Heart right ventricle (tissue), 16 donors: ENCODE measurements at regions of chr2 and their contacts with region 1.

Region 1: GRCh38 chr2:46847235-46848068 is 68.2 kb downstream of the MCFD2 start:
- DNase-seq: peak; percentile 91 to 96
- ATAC-seq: peak; percentile 70 to 92 (median 88)
- H3K4me3 ChIP-seq: no peak overlapping the region
- H3K27ac ChIP-seq: peak overlapping the region; percentile 85 to 96 (median 92)
- H3K4me1 ChIP-seq: peaks cover 44 to 71% (median 65%) of the 10 kb centered on the region in 9 donors
- H3K27me3 ChIP-seq: no peaks in the 10 kb centered on the region
- CTCF ChIP-seq: peak in 3 of 9 donors; percentile 21 to 41 (median 29)

Region 2: DNA sequence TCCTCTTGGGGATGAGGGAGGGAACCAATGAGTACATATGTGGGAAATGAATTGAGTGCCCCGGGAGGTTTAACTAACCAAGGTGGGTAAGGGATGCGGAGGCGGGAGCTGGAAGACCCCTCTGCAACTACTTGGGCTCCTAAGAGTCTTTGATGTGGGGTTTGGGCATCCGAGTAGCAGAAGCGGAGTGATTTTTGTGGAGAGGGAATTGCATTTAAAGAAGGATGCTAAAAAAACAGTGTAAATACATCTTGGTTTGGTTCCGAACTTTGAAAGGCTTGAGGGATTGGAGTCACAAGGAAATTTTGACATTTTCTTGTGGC is 147.6 kb before region 1 on chr2:
- intact Hi-C with region 1: loop called in 1 of 10 experiments (anchors 10 kb)
- DNase-seq: no peak
- ATAC-seq: no peak
- H3K4me3 ChIP-seq: peak overlapping the region; percentile 69 to 94 (median 79)
- H3K27ac ChIP-seq: peak overlapping the region; percentile 92 to 99 (median 95)
- H3K4me1 ChIP-seq: peaks cover 2 to 58% (median 47%) of the 10 kb centered on the region in 9 donors
- H3K27me3 ChIP-seq: no peaks in the 10 kb centered on the region
- CTCF ChIP-seq: no peak

Region 3: DNA sequence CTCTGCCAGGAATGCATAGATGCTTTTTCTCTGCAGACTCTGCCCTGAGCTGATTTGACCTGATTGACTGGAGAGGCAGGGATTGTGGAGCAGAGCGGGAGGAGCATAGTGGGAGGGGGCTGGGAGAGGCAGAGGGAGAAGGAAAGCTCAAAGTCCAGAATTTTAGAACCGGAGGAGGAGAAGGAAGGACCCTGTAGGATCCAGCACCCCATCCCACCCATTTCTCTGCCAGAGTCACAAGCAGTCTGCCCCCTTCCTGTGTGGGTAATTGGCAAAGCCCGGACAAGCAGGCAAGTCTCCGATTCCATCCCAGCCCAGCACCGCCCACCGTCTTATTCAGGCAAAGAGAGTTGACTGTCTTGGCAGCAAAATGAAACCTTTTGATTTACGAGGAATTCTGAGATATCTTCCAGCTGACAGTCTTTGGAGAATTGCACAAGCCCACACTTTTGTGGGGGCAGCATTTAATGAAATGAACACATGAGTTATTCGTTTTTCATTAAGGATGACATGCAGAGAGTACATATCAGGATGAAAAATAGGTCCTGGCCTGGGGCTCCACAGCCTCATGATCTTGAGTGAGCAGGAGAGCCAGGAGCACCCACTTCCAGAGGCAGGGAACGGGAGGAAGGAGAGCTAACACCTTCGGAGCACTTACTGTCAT is 35.0 kb before region 1 on chr2:
- intact Hi-C with region 1: loop called in 4 of 10 experiments (anchors 1 to 5 kb)
- DNase-seq: peak; percentile 69 to 78
- ATAC-seq: peak; percentile 11 to 47 (median 38)
- H3K4me3 ChIP-seq: peak overlapping the region in 1 of 10 donors; percentile 5
- H3K27ac ChIP-seq: peak overlapping the region; percentile 57 to 93 (median 90)
- H3K4me1 ChIP-seq: peaks cover 36 to 63% (median 51%) of the 10 kb centered on the region in 9 donors
- H3K27me3 ChIP-seq: no peaks in the 10 kb centered on the region
- CTCF ChIP-seq: no peak

Region 4: GRCh38 chr2:46818121-46818888 is 29.1 kb before region 1 on chr2:
- intact Hi-C with region 1: loop called in 7 of 10 experiments (anchors 1 to 5 kb)
- DNase-seq: peak; percentile 86 to 87
- ATAC-seq: peak; percentile 81 to 94 (median 89)
- H3K4me3 ChIP-seq: no peak overlapping the region
- H3K27ac ChIP-seq: peak overlapping the region; percentile 71 to 92 (median 88)
- H3K4me1 ChIP-seq: peaks cover 44 to 73% (median 61%) of the 10 kb centered on the region in 9 donors
- H3K27me3 ChIP-seq: no peaks in the 10 kb centered on the region
- CTCF ChIP-seq: no peak